Naive thymus-derived CD4-positive, alpha-beta T cell (primary cell): ENCODE measurements at regions of chr5 and their contacts with region 1.

Region 1: DNA sequence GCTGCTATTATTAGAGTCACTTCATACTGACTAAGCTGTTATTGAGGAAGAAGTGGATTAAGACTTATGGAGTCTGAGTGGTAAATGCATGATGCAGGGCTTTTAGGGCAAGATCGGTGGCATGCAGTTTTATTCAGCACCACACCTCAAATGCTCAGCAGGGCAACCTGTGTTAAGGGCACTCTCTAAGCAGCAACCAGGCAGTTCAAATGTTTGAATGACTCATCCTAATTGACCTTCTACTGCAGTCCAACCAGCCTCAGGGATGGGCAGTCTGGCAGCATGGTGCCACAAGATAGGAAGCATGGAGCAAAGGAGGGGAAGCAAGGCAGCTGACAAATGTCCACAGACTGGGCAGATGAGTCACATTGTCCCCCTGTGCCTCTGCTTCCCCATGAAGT is 80.2 kb upstream of the MIER3 start:
- DNase-seq: no peak
- ATAC-seq: no peak
- H3K4me3 ChIP-seq: no peak overlapping the region
- H3K4me3 Mint-ChIP-seq: peak overlapping the region in 2 of 10 donors; percentile 46 to 84
- H3K27ac ChIP-seq: no peak overlapping the region
- H3K27ac Mint-ChIP-seq: peak overlapping the region in 1 of 9 donors; percentile 96
- H3K4me1 ChIP-seq: no peaks in the 10 kb centered on the region
- H3K4me1 Mint-ChIP-seq: peaks cover 9 to 23% (median 14%) of the 10 kb centered on the region in 7 donors
- H3K27me3 ChIP-seq: no peaks in the 10 kb centered on the region
- H3K27me3 Mint-ChIP-seq: peaks cover 0 to 21% (median 4%) of the 10 kb centered on the region in 5 donors

Region 2: DNA sequence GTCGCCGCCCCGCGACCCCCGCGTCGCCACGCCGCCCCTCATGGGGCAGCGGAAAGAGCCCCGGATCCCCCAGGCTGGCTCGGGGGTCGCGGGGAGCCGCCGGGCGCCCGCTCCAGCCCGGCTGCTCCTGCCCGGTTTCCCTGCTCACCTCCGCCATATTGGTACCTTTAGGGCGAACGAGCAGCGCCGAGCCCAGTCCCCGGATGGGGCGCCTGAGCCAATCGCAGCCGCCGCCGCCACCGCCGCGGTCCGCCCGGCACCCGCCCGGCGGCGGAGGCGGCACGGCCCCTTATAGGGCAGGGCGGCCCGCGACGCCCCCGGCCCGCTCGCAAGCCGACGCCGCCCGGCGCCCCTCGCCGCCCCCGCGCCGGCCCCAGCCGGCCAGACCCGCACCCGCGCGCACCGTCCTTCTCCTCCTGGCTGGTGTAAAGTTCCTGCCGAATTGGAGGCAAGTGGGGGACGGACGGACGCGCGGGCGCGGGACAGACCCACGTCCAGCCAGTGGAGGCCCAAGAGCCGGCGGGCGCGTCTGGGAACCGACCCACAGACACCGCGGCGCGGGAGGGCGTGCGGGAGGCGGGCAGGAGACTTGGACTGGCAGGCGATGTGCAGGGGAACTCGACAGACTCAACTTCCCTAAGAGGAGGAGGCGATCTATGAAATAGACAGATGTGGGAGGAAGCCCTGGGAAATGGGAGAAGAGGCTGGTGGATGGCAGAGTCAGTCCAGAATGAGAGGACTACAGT is 80.0 kb before region 1 on chr5 and contains the start of gene MIER3:
- CTCF ChIA-PET with region 1: no interaction called
- POLR2A ChIA-PET with region 1: no interaction called
- intact Hi-C with region 1: loop called in 1 of 2 experiments (anchors 1 kb)
- DNase-seq: peak; percentile 66 to 87 (median 80)
- ATAC-seq: peak; percentile 94
- H3K4me3 ChIP-seq: peak within 1 kb of the TSS; percentile 75
- H3K4me3 Mint-ChIP-seq: peak within 1 kb of the TSS; percentile 89 to 98 (median 96)
- H3K27ac ChIP-seq: peak within 1 kb of the TSS; percentile 73
- H3K27ac Mint-ChIP-seq: peak within 1 kb of the TSS in 8 of 9 donors; percentile 84 to 95 (median 88)
- H3K4me1 ChIP-seq: peaks cover 6 to 10% of the 10 kb centered on the region in 2 donors
- H3K4me1 Mint-ChIP-seq: peaks cover 18 to 32% (median 22%) of the 10 kb centered on the region in 7 donors
- H3K27me3 ChIP-seq: peaks cover 0 to 5% of the 10 kb centered on the region in 2 donors
- H3K27me3 Mint-ChIP-seq: peaks cover 10 to 45% (median 24%) of the 10 kb centered on the region in 5 donors
- total RNA-seq, gene MIER3: 14.9 to 35.0 (median 26.2) TPM